ENCODE measurements at regions of chr20 and their contacts with region 1.

Region 1: DNA sequence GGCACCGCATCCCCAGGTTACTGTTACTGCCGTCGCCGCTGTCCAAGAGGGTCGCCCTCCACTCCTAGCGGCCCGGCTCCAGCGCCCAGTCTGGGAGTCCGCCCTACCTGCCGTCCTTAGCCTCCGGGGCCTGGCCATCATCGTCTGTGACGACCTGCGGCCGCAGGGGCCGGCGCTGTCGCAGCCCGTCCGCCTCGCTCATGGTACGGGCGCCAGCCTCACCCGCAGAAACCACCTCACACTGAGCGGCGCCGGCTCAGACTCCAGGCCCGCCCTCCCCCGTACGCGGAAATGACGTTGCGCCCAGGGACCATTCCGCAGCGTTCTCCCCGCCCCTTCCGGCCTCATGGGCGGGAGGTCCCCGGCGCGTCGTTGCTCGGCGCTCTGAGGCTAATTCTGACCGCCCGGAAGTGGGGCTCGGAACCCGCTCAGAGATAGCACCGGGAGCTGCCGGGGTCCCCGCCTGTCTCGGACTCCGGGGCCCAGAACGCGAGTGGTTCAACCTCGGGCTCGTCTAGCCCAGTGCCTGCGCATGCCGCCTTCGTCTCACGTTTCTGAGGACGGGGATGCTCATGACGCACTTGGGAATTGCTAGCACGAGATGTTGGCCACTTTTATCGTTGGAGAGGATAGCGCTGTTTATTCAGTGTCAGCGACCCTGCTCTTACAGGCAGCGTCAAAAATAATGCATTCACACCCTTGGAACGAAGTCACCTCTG is at the start of gene APMAP:
- DNase-seq: peak; percentile 96
- H3K4me3 ChIP-seq: peak within 1 kb of the TSS; percentile 70 to 86
- H3K27ac ChIP-seq: peak within 1 kb of the TSS; percentile 85 to 90
- H3K4me1 ChIP-seq: peaks cover 11% of the 10 kb centered on the region
- H3K27me3 ChIP-seq: no peaks in the 10 kb centered on the region
- CTCF ChIP-seq: peak in 1 of 4 experiments; percentile 29
- POLR2A ChIP-seq: peak; percentile 96
- total RNA-seq, gene APMAP: 70.5 to 93.8 TPM

Region 2: DNA sequence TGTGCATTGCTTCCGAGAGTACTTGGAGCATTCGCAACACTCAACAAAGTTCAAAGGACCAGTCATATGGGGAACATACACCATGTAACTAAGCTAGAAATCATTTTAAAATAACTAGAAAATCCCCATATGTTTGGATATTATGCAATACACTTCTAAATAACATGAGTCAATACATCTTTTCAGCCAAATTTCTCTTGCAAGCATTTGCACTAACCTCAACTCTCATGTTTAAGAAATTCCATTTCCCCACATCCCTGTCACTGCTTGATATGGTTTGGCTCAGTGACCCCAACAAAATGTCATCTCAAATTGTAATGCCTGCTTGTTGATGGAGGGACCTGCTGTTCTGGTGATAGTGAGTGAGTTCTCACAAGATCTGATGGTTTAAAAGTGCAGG is 129.3 kb before region 1 on chr20:
- intact Hi-C with region 1: no loop called
- DNase-seq: no peak
- H3K4me3 ChIP-seq: no peak overlapping the region
- H3K27ac ChIP-seq: no peak overlapping the region
- H3K4me1 ChIP-seq: no peaks in the 10 kb centered on the region
- H3K27me3 ChIP-seq: no peaks in the 10 kb centered on the region
- CTCF ChIP-seq: no peak
- POLR2A ChIP-seq: no peak

Region 3: GRCh38 chr20:25032478-25033280 is 40.0 kb after region 1 on chr20:
- intact Hi-C with region 1: loop called (anchors 5 kb)
- DNase-seq: no peak
- H3K4me3 ChIP-seq: no peak overlapping the region
- H3K27ac ChIP-seq: peak overlapping the region; percentile 47 to 48
- H3K4me1 ChIP-seq: peaks cover 19% of the 10 kb centered on the region
- H3K27me3 ChIP-seq: no peaks in the 10 kb centered on the region
- CTCF ChIP-seq: no peak
- POLR2A ChIP-seq: no peak

Region 4: DNA sequence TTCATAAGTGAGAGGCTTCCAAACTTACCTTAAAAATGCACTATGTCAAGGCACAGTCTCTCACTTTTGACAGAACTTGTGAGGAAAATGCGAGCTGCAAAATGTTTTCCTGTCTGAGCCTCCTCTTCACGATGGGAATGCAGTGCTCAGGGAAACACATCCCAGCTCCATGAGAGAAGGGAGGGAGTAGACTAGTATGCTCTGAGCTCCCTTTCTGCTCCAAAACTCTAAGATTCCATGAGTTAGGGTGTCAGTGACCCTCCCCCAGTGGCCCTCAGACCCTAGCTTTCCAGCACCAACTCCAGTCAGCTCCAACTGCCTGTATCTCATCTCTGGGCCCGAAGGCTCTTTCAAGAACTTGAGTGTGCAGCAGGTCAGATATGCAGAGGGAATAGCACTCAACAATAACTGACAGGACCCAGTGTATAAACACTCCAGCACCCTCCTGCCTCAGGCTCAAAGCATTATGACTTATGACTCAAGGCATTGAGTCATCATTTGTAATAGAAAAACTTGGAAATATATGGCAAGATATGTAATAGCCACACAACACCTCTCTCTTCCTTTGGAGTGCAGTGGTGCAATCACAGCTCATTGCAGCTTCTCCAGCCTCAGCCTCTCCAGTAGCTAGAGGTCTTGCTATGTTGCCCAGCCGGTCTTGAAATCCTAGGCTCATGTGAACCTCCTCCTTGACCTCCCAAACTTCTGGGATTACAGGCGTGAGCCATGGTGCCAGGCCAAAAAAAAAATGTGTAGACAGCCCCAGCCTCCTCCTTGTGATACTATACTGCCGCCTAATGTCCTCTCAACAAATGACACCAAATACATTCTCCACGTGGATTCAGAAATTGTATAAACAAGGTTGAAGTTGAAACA is 186.2 kb after region 1 on chr20:
- intact Hi-C with region 1: loop called (anchors 2 kb)
- DNase-seq: no peak
- H3K4me3 ChIP-seq: no peak overlapping the region
- H3K27ac ChIP-seq: peak overlapping the region; percentile 35 to 50
- H3K4me1 ChIP-seq: no peaks in the 10 kb centered on the region
- H3K27me3 ChIP-seq: no peaks in the 10 kb centered on the region
- CTCF ChIP-seq: peak in 3 of 4 experiments; percentile 66 to 78 (median 74)
- POLR2A ChIP-seq: no peak

Region 5: DNA sequence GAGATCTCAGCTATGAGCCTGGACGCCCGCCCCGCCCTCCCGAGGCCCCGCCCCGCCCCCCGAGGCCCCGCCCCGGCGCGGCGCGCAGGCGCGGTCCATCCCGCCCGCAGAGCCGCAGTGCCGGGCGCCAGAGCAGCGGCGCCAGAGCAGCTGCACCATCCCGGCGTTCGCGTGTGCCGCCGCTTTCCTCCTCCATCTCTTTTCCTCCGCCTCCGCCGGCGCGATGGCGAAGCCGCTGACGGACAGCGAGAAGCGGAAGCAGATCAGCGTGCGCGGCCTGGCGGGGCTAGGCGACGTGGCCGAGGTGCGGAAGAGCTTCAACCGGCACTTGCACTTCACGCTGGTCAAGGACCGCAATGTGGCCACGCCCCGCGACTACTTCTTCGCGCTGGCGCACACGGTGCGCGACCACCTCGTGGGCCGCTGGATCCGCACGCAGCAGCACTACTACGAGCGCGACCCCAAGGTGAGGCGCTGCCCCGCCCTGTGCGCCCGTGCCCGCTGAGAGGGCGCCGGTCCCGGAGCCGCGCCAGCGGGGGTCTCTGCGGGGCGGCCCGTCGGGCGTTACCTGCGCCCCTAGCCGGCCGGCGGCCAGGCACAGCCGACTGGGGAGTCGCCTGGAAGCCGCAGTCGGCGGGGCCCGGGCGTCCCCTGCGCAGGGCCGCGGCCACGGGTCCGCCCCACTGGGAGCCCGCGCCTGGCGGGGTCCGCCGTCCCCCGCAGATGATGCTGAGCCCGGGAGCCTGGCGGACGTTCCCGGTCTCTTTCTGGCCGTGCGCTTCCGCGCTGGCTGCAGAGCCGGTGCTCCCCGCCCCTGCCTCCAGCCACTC is 255.5 kb after region 1 on chr20 and contains the start of gene PYGB:
- intact Hi-C with region 1: loop called (anchors 5 kb)
- DNase-seq: peak; percentile 83
- H3K4me3 ChIP-seq: peak within 1 kb of the TSS; percentile 91 to 97
- H3K27ac ChIP-seq: peak within 1 kb of the TSS; percentile 96 to 98
- H3K4me1 ChIP-seq: peaks cover 25% of the 10 kb centered on the region
- H3K27me3 ChIP-seq: no peaks in the 10 kb centered on the region
- CTCF ChIP-seq: peak in 1 of 4 experiments; percentile 9
- POLR2A ChIP-seq: peak; percentile 95
- total RNA-seq, gene PYGB: 231 to 261 TPM

Region 6: GRCh38 chr20:25407311-25408169 is 414.9 kb after region 1 on chr20 and contains the start of gene GINS1:
- intact Hi-C with region 1: loop called (anchors 5 kb)
- DNase-seq: peak; percentile 71
- H3K4me3 ChIP-seq: peak within 1 kb of the TSS; percentile 42 to 46
- H3K27ac ChIP-seq: peak within 1 kb of the TSS; percentile 7 to 52
- H3K4me1 ChIP-seq: peaks cover 3% of the 10 kb centered on the region
- H3K27me3 ChIP-seq: no peaks in the 10 kb centered on the region
- CTCF ChIP-seq: no peak
- POLR2A ChIP-seq: no peak
- total RNA-seq, gene GINS1: 2.2 to 6.0 TPM